Activated CD4-positive, alpha-beta T cell treated with anti-CD3 and anti-CD28 coated beads, Interleukin-2, amount 10 ng/mL, durations not matched to agents 24 days and 14 days (primary cell): ENCODE measurements at regions of chr4 and their contacts with region 1.

Region 1: DNA sequence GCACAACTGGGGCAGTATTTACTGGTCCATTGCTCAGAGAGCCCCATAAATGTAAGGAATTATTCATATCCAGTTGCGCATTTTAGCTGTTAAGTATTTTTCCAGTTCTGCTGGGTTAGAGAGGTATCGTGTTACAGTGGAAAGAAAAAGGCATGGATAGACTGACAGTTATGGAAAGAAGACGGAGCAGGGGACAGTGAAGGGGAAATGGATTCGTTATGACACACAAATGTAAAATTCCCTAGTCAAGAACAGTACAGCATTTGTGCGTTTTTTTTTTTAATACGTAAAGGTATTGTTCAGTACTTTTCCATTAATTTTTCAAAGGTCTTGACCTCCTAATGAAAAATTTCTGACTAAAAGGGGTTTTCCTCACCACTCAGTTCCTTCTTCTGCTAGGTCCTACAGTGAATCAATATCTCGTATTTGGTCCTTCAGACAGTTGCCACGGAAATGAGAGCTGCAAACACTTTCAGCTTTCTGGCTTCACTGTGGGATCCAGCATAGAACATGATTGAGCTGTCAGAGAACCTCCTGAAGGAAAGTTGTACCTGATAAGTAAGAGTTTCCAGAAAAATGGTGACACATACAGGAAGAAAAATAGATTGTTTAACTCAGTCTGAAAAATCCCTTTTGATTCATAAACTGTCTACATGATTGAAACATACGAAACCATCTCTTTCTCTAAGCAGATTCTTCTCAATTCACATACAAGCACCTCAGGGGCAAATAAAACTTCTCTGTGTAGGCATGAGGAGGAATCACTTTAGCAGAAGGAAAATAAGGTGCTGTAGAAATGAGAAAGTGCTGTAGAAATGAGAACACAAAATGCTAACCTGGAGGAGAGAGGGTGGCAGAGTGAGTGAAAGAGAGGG is 21.8 kb upstream of the BBS12 start:
- DNase-seq: peak; percentile 80
- H3K4me3 Mint-ChIP-seq: peak overlapping the region; percentile 84
- H3K27ac Mint-ChIP-seq: peak overlapping the region; percentile 98
- H3K4me1 Mint-ChIP-seq: peaks cover 64% of the 10 kb centered on the region
- H3K27me3 Mint-ChIP-seq: no peaks in the 10 kb centered on the region

Region 2: DNA sequence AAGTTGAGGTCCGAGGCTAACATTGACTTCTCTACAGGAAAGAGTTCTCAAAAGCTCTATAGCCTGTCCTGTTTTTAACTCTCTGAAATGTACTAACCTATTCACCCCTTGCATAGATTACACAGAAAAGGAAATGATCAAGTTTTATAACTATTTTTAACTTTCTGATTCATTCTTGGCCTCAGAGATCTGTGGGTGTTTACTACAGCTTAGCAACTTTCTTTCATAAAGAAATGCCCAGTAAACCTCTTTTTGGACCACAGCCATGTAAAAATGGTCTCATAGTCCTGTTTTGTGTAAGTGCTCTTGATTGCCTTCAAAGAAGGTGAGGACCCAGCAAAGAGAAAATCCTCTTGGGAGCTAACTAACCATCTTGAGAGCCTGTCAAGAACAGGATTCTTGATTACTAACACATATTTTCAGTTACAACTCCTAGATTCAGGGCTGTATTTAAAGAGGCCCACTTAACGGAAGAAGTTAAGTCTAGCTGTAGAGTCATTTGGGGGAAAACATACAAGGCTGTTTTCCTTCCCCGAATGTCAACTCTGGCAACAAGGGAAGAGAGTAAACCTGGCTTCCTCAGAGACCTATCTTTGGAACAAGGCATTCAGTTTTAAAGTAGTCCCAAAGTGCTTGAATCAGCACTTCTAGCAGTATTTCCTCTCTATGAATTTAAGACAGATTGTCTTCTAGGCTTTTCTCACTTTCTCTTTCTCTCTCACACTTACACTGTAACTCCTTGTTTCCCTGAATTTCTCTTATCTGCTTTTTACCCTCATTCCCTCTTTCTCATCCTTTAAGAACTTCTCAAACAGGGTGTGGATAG is 168.0 kb before region 1 on chr4:
- intact Hi-C with region 1: loop called (anchors 1 kb)
- DNase-seq: peak; percentile 69
- H3K4me3 Mint-ChIP-seq: peak overlapping the region; percentile 78
- H3K27ac Mint-ChIP-seq: peak overlapping the region; percentile 94
- H3K4me1 Mint-ChIP-seq: peaks cover 80% of the 10 kb centered on the region
- H3K27me3 Mint-ChIP-seq: no peaks in the 10 kb centered on the region

Region 3: GRCh38 chr4:122617597-122618593 is 92.8 kb before region 1 on chr4:
- intact Hi-C with region 1: loop called (anchors 1 kb)
- DNase-seq: peak; percentile 58
- H3K4me3 Mint-ChIP-seq: peak overlapping the region; percentile 89
- H3K27ac Mint-ChIP-seq: peak overlapping the region; percentile 91
- H3K4me1 Mint-ChIP-seq: peaks cover 50% of the 10 kb centered on the region
- H3K27me3 Mint-ChIP-seq: no peaks in the 10 kb centered on the region

Region 4: DNA sequence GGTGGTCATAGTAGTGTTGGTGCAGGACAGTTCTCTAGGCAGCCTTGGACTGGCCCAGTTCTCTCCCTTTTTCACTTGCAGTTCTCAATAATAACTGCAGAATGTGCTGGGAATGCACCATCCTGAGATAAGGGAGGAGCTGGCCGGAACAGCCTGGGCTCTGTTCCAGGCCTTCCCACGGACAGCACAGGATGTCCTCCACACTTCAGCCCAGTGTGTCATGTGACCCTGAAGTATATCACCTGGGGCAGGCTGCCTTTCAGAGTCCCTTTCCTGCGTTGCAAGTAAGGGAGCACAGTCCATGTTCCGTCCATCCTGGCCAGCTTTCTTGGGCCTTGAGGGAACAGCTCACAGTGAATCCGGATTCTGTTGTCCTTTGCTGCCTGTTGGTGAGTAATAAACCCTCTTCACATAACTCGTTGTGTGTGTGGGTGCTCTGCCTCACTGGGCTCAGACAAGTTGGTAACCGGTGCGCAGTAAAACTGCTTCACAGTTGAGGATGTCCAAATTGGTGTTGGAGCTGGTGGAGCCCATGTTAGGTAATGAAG is 10.4 kb before region 1 on chr4:
- intact Hi-C with region 1: loop called (anchors 1 kb)
- DNase-seq: no peak
- H3K4me3 Mint-ChIP-seq: peak overlapping the region; percentile 76
- H3K27ac Mint-ChIP-seq: peak overlapping the region; percentile 94
- H3K4me1 Mint-ChIP-seq: peaks cover 55% of the 10 kb centered on the region
- H3K27me3 Mint-ChIP-seq: no peaks in the 10 kb centered on the region

Region 5: GRCh38 chr4:122842984-122843531 is 132.4 kb after region 1 on chr4:
- intact Hi-C with region 1: no loop called
- DNase-seq: no peak
- H3K4me3 Mint-ChIP-seq: no peak overlapping the region
- H3K27ac Mint-ChIP-seq: no peak overlapping the region
- H3K4me1 Mint-ChIP-seq: peaks cover 6% of the 10 kb centered on the region
- H3K27me3 Mint-ChIP-seq: peaks cover 7% of the 10 kb centered on the region